H1 (cell line): ENCODE measurements at regions of chr5 and their contacts with region 1.

Region 1: GRCh38 chr5:142783601-142784341 is 13.6 kb downstream of the ARHGAP26 start:
- DNase-seq: no peak
- H3K4me3 ChIP-seq: no peak overlapping the region
- H3K27ac ChIP-seq: no peak overlapping the region
- H3K4me1 ChIP-seq: peaks cover 14 to 25% (median 17%) of the 10 kb centered on the region in 4 experiments
- H3K27me3 ChIP-seq: no peaks in the 10 kb centered on the region
- CTCF ChIP-seq: no peak
- EP300 ChIP-seq: no peak
- POLR2A ChIP-seq: no peak
- RAD21 ChIP-seq: no peak

Region 2: GRCh38 chr5:142769741-142770631 is 13.8 kb before region 1 on chr5 and contains the start of gene ARHGAP26:
- CTCF ChIA-PET with region 1: interaction called, 79 read pairs
- POLR2A ChIA-PET with region 1: interaction called, 23 read pairs
- DNase-seq: peak; percentile 93 to 94
- H3K4me3 ChIP-seq: peak within 1 kb of the TSS; percentile 77 to 91 (median 83)
- H3K27ac ChIP-seq: no peak within 1 kb of the TSS; the same call in 1 of the 2 replicates
- H3K4me1 ChIP-seq: peaks cover 0 to 10% (median 5%) of the 10 kb centered on the region in 4 experiments; a peak in 6 of 7 replicates
- H3K27me3 ChIP-seq: peaks cover 0 to 8% (median 2%) of the 10 kb centered on the region in 4 experiments; a peak in 4 of 7 replicates
- CTCF ChIP-seq: peak in 2 of 3 experiments; percentile 16 to 17; a peak in 3 of 4 replicates
- EP300 ChIP-seq: no peak
- POLR2A ChIP-seq: peak; percentile 85 to 87
- RAD21 ChIP-seq: peak; percentile 11 to 25; a peak in 2 of 4 replicates
- total RNA-seq, gene ARHGAP26: 20.6 and 24.8 TPM in 2 replicates

Region 3: DNA sequence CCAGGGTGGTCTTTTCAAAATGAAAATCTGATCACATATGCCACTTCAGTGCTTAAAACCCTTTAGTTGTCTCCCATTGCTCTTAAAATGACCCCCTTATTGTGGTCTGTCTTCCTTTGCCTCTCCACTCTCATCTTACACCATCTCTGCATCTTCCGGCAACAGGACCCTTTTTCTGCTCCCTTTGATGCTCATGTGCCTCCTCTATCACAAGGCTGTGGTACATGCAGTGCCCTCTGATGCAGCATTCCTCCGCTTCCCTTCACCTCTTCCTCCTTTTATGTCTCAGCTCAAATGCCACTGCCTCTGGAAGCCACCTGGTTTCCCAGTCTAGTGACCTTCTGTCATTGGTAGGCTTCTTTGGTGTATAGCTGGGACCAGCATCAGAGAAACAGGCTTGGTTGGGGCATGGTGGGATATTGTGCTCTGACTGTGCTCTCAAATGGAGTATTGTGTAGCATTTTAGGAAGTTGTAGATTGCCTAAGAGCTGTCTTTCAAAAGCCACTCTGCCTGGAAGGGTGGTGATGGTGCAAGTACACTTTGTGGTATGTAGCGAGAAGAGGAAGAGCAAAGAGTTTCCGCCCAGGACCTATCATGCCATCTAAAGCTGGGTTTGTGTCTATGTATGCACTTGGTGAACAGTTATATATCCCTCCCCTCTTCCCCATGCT is 14.5 kb after region 1 on chr5:
- CTCF ChIA-PET with region 1: interaction called, 25 read pairs
- POLR2A ChIA-PET with region 1: no interaction called
- DNase-seq: no peak
- H3K4me3 ChIP-seq: no peak overlapping the region
- H3K27ac ChIP-seq: no peak overlapping the region
- H3K4me1 ChIP-seq: peaks cover 0 to 12% (median 3%) of the 10 kb centered on the region in 4 experiments; a peak in 4 of 7 replicates
- H3K27me3 ChIP-seq: no peaks in the 10 kb centered on the region
- CTCF ChIP-seq: no peak
- EP300 ChIP-seq: no peak
- POLR2A ChIP-seq: no peak
- RAD21 ChIP-seq: no peak

Region 4: GRCh38 chr5:142852416-142853198 is 68.8 kb after region 1 on chr5:
- CTCF ChIA-PET with region 1: interaction called, 10 read pairs
- POLR2A ChIA-PET with region 1: interaction called, 3 read pairs
- DNase-seq: no peak
- H3K4me3 ChIP-seq: no peak overlapping the region
- H3K27ac ChIP-seq: no peak overlapping the region
- H3K4me1 ChIP-seq: peaks cover 3 to 25% (median 9%) of the 10 kb centered on the region in 4 experiments; a peak in 5 of 7 replicates
- H3K27me3 ChIP-seq: no peaks in the 10 kb centered on the region
- CTCF ChIP-seq: no peak
- EP300 ChIP-seq: no peak
- POLR2A ChIP-seq: no peak
- RAD21 ChIP-seq: no peak

Region 5: GRCh38 chr5:142860270-142860669 is 76.5 kb after region 1 on chr5:
- CTCF ChIA-PET with region 1: interaction called, 11 read pairs
- POLR2A ChIA-PET with region 1: interaction called, 3 read pairs
- DNase-seq: no peak
- H3K4me3 ChIP-seq: no peak overlapping the region
- H3K27ac ChIP-seq: no peak overlapping the region
- H3K4me1 ChIP-seq: peaks cover 15 to 33% (median 20%) of the 10 kb centered on the region in 4 experiments
- H3K27me3 ChIP-seq: no peaks in the 10 kb centered on the region
- CTCF ChIP-seq: no peak
- EP300 ChIP-seq: no peak
- POLR2A ChIP-seq: no peak
- RAD21 ChIP-seq: no peak

Region 6: GRCh38 chr5:142874537-142874936 is 90.8 kb after region 1 on chr5:
- CTCF ChIA-PET with region 1: interaction called, 16 read pairs
- POLR2A ChIA-PET with region 1: no interaction called
- DNase-seq: no peak
- H3K4me3 ChIP-seq: no peak overlapping the region
- H3K27ac ChIP-seq: no peak overlapping the region
- H3K4me1 ChIP-seq: peaks cover 0 to 3% (median 2%) of the 10 kb centered on the region in 4 experiments; a peak in 2 of 7 replicates
- H3K27me3 ChIP-seq: no peaks in the 10 kb centered on the region
- CTCF ChIP-seq: no peak
- EP300 ChIP-seq: no peak
- POLR2A ChIP-seq: no peak
- RAD21 ChIP-seq: no peak

Region 7: GRCh38 chr5:142881076-142881783 is 97.5 kb after region 1 on chr5:
- CTCF ChIA-PET with region 1: interaction called, 16 read pairs
- POLR2A ChIA-PET with region 1: no interaction called
- DNase-seq: no peak
- H3K4me3 ChIP-seq: peak overlapping the region in 1 of 4 experiments; percentile 29; a peak in 1 of 8 replicates
- H3K27ac ChIP-seq: 0 out of 2 replicates have a peak overlapping the region, but pooled peaks have one; percentile 6
- H3K4me1 ChIP-seq: peaks cover 10 to 22% (median 15%) of the 10 kb centered on the region in 4 experiments
- H3K27me3 ChIP-seq: no peaks in the 10 kb centered on the region
- CTCF ChIP-seq: no peak
- EP300 ChIP-seq: no peak
- POLR2A ChIP-seq: no peak
- RAD21 ChIP-seq: no peak